GM10248 (cell line): ENCODE measurements at regions of chr9 and their contacts with region 1.

Region 1: GRCh38 chr9:14768405-14769229 is 46.1 kb upstream of the CER1 start:
- DNase-seq: peak; percentile 21
- CTCF ChIP-seq: peak; percentile 57

Region 2: GRCh38 chr9:14466429-14466818 is 302.2 kb before region 1 on chr9:
- CTCF ChIA-PET with region 1: interaction called, 19 read pairs
- POLR2A ChIA-PET with region 1: no interaction called
- DNase-seq: no peak
- CTCF ChIP-seq: no peak

Region 3: GRCh38 chr9:14722391-14723035 is 46.1 kb before region 1 on chr9 and contains the start of gene CER1:
- CTCF ChIA-PET with region 1: interaction called, 14 read pairs
- POLR2A ChIA-PET with region 1: no interaction called
- DNase-seq: no peak
- CTCF ChIP-seq: no peak

Region 4: DNA sequence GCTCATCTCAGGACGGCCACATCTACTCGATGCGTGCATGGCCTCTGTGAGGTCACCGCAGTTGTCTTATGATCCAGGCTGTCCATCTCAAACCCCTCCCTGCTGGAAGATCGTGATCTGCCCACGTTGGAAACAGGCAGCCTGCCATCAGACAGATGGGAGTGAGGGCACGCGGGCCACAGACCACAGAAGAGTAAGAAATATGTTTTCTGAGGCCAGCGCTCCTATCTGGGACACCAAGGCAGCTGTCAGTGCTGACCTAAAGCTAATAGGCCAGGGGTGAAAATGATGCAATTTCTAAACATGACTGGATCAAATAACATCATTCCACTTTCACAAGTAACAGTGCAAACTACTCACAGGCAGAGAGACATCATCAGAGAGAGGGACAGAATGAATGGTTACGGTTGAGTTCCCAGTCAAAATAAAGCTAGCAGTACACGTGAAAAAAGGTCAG is 11.0 kb after region 1 on chr9:
- CTCF ChIA-PET with region 1: interaction called, 23 read pairs
- POLR2A ChIA-PET with region 1: no interaction called
- DNase-seq: no peak
- CTCF ChIP-seq: no peak

Region 5: GRCh38 chr9:14961372-14962068 is 192.9 kb after region 1 on chr9:
- CTCF ChIA-PET with region 1: no interaction called
- POLR2A ChIA-PET with region 1: no interaction called
- DNase-seq: no peak
- CTCF ChIP-seq: no peak